ENCODE measurements at regions of chr2 and their contacts with region 1.

Region 1: GRCh38 chr2:86079981-86080911 is 25.4 kb downstream of the POLR1A start:
- DNase-seq: peak; percentile 69 to 82
- ATAC-seq: peak; percentile 84 to 88
- H3K4me3 ChIP-seq: no peak overlapping the region
- H3K27ac ChIP-seq: peak overlapping the region; percentile 62 to 77 (median 68)
- H3K4me1 ChIP-seq: peaks cover 18 to 19% of the 10 kb centered on the region in 2 donors
- H3K27me3 ChIP-seq: no peaks in the 10 kb centered on the region
- CTCF ChIP-seq: peak; percentile 82 to 88 (median 86)
- POLR2A ChIP-seq: no peak

Region 2: DNA sequence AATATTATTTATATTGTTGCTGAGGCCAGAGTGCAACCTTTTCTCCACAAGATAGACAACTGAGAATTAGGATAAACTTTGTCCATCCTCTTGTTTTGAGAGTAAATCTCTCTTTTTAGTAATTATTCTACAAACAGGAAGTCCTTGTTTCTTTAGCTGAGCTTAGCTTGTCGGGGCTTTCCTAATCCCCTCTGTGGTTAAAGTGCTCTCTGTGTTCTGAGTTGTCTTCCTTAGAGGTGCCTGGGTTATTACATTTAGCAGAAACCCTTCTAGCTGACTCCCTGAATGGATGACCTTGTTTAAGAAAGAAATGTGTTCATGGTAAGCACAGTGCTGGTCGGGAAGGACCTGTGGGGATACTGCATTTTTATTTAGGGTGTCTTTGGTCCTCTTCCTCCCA is 451.6 kb before region 1 on chr2:
- in situ Hi-C with region 1: loop called (anchors 10 to 25 kb)
- intact Hi-C with region 1: loop called (anchors 10 kb)
- DNase-seq: no peak
- ATAC-seq: no peak
- H3K4me3 ChIP-seq: no peak overlapping the region
- H3K27ac ChIP-seq: no peak overlapping the region
- H3K4me1 ChIP-seq: no peaks in the 10 kb centered on the region
- H3K27me3 ChIP-seq: no peaks in the 10 kb centered on the region
- CTCF ChIP-seq: no peak
- POLR2A ChIP-seq: no peak

Region 3: DNA sequence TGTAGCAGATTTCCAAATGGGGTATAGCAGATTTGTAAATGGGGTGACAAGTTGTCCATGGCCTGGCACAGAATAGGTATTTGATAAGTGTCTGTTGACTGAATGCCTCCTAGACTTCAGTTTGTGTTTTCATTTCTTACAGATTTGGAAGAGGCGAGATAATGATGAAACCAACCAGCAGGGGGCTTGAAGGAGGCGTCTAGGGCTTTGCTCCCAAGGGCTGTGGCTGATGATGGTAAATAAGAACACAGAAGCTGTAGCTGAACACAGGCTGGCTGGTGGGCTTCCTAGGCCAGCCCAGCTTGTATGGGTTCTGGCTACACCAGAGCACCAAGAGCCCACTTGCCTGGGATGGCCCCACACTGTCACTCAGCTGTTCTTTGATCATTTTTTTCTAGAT is 431.6 kb before region 1 on chr2:
- in situ Hi-C with region 1: loop called in 3 of 4 experiments (anchors 25 kb)
- intact Hi-C with region 1: no loop called
- DNase-seq: no peak
- ATAC-seq: no peak
- H3K4me3 ChIP-seq: no peak overlapping the region
- H3K27ac ChIP-seq: peak overlapping the region; percentile 48 to 92 (median 82)
- H3K4me1 ChIP-seq: peaks cover 8 to 11% of the 10 kb centered on the region in 2 donors
- H3K27me3 ChIP-seq: no peaks in the 10 kb centered on the region
- CTCF ChIP-seq: peak; percentile 17 to 51 (median 42)
- POLR2A ChIP-seq: no peak

Region 4: DNA sequence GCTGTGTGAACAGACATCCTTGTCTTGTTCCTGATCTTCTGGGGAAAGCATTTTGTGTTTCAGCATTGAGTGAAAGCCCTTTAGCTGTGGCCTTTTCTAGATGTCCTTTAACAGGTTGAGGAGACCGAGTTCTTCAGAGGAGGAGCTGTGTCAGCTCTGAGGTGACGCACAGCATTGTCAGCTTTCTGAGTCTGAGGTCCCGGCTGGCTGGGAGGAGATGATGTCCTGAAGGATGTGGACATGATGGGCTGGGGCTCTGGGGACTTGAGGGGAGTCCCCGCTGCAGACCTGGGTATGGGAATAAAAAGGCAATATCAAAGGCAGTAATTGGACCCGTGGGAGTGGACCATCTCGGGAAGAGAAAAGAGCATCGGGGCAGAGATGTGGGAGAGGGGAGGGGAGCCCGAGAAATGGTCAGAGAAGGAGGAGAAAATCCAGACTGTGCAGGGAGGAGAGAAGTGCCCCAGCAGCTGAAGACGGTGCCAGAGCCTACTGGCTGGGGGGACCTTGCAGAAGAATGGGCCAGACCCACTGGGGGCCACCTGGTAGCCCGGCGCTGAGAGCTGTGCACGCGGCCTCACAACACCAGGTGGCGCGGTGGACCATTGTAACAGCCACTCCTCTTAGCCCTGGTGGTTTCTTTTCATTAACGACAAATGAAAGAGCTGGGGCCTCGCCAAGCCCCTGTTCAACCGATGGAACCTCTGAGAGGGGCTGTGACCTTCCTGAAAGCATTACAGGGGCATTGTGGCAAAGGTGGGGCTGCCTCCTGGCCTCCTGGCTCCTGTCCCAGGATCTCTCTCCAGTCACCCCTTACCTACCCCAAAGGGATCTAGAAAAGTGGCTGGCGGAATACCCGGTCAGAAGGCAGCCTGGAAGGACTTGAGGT is 253.0 kb before region 1 on chr2:
- in situ Hi-C with region 1: loop called (anchors 5 kb)
- intact Hi-C with region 1: loop called (anchors 1 kb)
- DNase-seq: peak; percentile 45 to 61
- ATAC-seq: peak; percentile 81 to 85
- H3K4me3 ChIP-seq: peak overlapping the region in 3 of 4 donors; percentile 17 to 26 (median 23)
- H3K27ac ChIP-seq: no peak overlapping the region
- H3K4me1 ChIP-seq: peaks cover 4 to 7% of the 10 kb centered on the region in 2 donors
- H3K27me3 ChIP-seq: no peaks in the 10 kb centered on the region
- CTCF ChIP-seq: peak; percentile 89 to 95 (median 92)
- POLR2A ChIP-seq: no peak

Region 5: GRCh38 chr2:86035883-86036668 is 44.2 kb before region 1 on chr2:
- in situ Hi-C with region 1: no loop called
- intact Hi-C with region 1: loop called (anchors 1 kb)
- DNase-seq: peak; percentile 91 to 96
- ATAC-seq: peak; percentile 83 to 87
- H3K4me3 ChIP-seq: no peak overlapping the region
- H3K27ac ChIP-seq: peak overlapping the region; percentile 91 to 99 (median 98)
- H3K4me1 ChIP-seq: peaks cover 52 to 58% of the 10 kb centered on the region in 2 donors
- H3K27me3 ChIP-seq: no peaks in the 10 kb centered on the region
- CTCF ChIP-seq: peak; percentile 21 to 55 (median 29)
- POLR2A ChIP-seq: peak; percentile 67 to 84